Posterior cingulate gyrus (tissue), 11 donors: ENCODE measurements at regions of chr9 and their contacts with region 1.

Region 1: DNA sequence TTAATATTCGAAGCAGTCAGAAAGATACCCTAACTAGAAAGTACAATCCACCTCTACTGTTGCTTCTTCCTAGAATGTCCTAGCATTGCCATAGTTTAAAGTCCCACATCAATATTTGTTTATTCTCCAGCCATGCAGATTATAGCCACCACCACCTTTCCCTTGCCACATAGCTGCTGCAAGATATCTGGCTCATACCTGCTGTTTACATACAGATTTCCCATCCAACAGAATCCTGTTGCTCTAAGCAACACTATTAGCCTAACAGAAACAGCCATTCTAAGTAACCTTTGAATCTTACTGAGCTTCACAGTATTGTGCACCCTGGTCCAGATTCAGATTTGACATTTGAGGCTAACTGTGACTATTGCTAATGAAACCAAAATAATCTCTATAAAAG is 45.6 kb downstream of the GNAQ start:
- DNase-seq: no peak

Region 2: GRCh38 chr9:77997611-77998284 is 11.8 kb after region 1 on chr9:
- intact Hi-C with region 1: loop called (anchors 2 kb)
- DNase-seq: no peak

Region 3: GRCh38 chr9:78479441-78479840 is 493.4 kb after region 1 on chr9:
- intact Hi-C with region 1: no loop called
- DNase-seq: no peak